OCI-LY7 (cell line): ENCODE measurements at regions of chr16 and their contacts with region 1.

Region 1: DNA sequence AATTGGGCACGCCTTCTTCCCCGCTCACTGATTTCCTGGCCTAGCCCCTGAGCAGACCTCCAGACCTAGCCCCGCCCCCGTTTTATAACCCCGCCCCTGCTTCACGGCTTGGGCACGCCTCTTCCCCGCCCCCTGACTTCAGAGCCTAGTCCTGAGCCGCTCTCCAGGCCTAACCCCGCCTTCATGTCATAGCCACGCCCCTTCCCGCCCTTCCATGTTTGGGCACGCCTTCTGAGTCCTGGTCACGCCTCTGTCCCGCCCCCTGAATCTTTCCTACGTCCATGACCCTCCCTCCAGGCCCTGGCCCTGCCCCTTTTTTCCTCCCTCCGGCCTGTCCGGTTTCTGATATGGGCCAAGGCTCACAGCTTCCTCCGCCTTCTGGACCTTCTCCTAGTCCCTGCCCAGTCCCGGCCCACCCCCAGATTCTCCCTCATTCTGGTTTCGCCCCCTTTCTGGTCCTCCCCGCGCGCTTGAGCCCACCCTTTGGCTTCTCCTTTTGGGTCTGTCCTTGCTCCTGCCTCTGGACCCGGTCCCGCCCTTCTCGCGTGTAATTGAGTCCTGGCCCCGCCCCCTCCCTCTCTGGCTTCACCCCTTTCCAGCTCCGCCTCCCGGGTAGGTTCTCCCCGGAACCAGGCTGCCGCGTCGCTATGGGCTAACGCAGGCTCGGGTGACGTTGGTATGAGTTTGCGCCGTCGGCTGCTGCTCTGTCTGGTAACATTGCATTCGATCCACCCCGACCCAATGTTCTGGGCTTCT is 15.1 kb upstream of the EEF2K start:
- DNase-seq: peak; percentile 95
- H3K4me3 ChIP-seq: peak overlapping the region; percentile 78
- H3K27ac ChIP-seq: peak overlapping the region; percentile 40
- H3K4me1 ChIP-seq: peaks cover 39% of the 10 kb centered on the region
- CTCF ChIP-seq: no peak

Region 2: GRCh38 chr16:21952793-21953540 is 238.0 kb before region 1 on chr16 and contains the start of gene UQCRC2:
- CTCF ChIA-PET with region 1: interaction called, 3 read pairs
- POLR2A ChIA-PET with region 1: no interaction called
- intact Hi-C with region 1: loop called (anchors 2 kb)
- DNase-seq: peak; percentile 95
- H3K4me3 ChIP-seq: peak within 1 kb of the TSS; percentile 93
- H3K27ac ChIP-seq: peak within 1 kb of the TSS; percentile 67
- H3K4me1 ChIP-seq: peaks cover 36% of the 10 kb centered on the region
- CTCF ChIP-seq: no peak
- total RNA-seq, gene UQCRC2: 121 and 129 TPM in 2 replicates

Region 3: GRCh38 chr16:22007509-22008214 is 183.3 kb before region 1 on chr16 and contains the start of gene MOSMO:
- CTCF ChIA-PET with region 1: interaction called, 3 read pairs
- POLR2A ChIA-PET with region 1: interaction called, 10 read pairs
- intact Hi-C with region 1: no loop called
- DNase-seq: peak; percentile 65
- H3K4me3 ChIP-seq: peak within 1 kb of the TSS; percentile 99
- H3K27ac ChIP-seq: no peak within 1 kb of the TSS
- H3K4me1 ChIP-seq: peaks cover 16% of the 10 kb centered on the region
- CTCF ChIP-seq: no peak
- total RNA-seq, gene MOSMO: 6.8 and 9.6 TPM in 2 replicates

Region 4: GRCh38 chr16:22098405-22099255 is 92.3 kb before region 1 on chr16:
- CTCF ChIA-PET with region 1: no interaction called
- POLR2A ChIA-PET with region 1: interaction called, 3 read pairs
- intact Hi-C with region 1: loop called (anchors 5 kb)
- DNase-seq: peak; percentile 76
- H3K4me3 ChIP-seq: peak overlapping the region; percentile 22
- H3K27ac ChIP-seq: no peak overlapping the region
- H3K4me1 ChIP-seq: no peaks in the 10 kb centered on the region
- CTCF ChIP-seq: peak; percentile 89

Region 5: DNA sequence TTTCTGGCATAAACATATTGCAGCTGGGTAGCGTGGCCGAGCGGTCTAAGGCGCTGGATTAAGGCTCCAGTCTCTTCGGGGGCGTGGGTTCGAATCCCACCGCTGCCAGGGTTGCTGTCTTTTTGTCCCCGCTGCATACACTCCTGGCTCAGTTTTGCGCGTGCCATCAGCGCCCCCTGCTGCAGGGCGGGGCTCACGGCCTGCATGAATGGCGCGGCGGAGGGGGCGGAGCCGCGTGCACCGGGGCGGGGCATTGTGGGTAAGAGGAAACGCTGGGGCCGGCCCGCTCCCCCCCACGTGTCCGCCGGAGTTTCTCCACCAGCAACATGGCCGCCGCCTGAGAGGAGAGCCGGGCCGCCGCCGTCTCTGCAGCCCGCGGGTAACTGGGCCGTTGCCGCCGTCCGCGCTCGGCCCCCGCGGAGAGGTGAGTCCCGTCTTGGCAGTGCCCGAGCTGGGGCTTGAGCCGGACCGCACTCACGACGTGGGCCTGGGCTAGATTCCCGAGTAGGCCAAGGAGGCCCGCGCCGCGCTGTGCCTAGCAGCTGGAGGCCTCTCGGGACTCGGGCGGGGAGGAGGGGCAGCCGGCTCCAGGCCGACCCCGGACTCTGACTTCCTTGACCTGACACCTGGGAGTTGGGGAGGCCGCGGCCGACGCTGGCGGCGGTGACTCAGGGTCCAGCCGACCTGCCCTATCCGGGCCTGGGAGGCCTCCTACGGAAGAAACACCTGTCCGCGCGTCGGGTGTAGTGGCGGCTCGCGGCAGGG is 106.3 kb after region 1 on chr16 and contains the start of gene POLR3E:
- CTCF ChIA-PET with region 1: no interaction called
- POLR2A ChIA-PET with region 1: interaction called, 3 read pairs
- intact Hi-C with region 1: loop called (anchors 1 kb)
- DNase-seq: peak; percentile 97
- H3K4me3 ChIP-seq: peak within 1 kb of the TSS; percentile 95
- H3K27ac ChIP-seq: peak within 1 kb of the TSS; percentile 74
- H3K4me1 ChIP-seq: peaks cover 25% of the 10 kb centered on the region
- CTCF ChIP-seq: peak; percentile 84
- total RNA-seq, gene POLR3E: 71.1 and 74.5 TPM in 2 replicates

Region 6: DNA sequence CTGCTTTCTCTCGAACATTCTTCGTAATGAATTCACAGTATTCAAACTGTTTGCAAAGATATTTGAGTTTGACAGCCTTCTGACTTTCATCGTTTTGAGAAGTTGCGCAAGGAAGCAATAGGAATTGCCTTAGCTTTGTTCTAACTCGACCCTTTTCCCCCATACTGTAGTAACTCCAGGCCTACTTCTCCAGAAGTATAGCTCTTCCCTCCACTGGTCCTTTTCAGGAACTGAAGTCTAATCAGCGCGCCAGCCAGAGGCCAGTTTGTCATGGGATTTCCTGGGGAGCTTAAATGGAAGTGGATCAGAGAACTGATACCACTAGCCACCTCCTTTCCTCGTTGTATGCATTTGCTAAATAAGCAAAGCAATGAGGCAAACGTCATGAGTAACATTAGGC is 155.5 kb after region 1 on chr16:
- CTCF ChIA-PET with region 1: no interaction called
- POLR2A ChIA-PET with region 1: no interaction called
- intact Hi-C with region 1: no loop called
- DNase-seq: no peak
- H3K4me3 ChIP-seq: no peak overlapping the region
- H3K27ac ChIP-seq: no peak overlapping the region
- H3K4me1 ChIP-seq: no peaks in the 10 kb centered on the region
- CTCF ChIP-seq: no peak

Region 7: GRCh38 chr16:23016368-23016767 is 825.4 kb after region 1 on chr16:
- CTCF ChIA-PET with region 1: no interaction called
- POLR2A ChIA-PET with region 1: no interaction called
- intact Hi-C with region 1: no loop called
- DNase-seq: no peak
- H3K4me3 ChIP-seq: no peak overlapping the region
- H3K27ac ChIP-seq: no peak overlapping the region
- H3K4me1 ChIP-seq: no peaks in the 10 kb centered on the region
- CTCF ChIP-seq: no peak